ENCODE measurements at regions of chr2 and their contacts with region 1.

Region 1: DNA sequence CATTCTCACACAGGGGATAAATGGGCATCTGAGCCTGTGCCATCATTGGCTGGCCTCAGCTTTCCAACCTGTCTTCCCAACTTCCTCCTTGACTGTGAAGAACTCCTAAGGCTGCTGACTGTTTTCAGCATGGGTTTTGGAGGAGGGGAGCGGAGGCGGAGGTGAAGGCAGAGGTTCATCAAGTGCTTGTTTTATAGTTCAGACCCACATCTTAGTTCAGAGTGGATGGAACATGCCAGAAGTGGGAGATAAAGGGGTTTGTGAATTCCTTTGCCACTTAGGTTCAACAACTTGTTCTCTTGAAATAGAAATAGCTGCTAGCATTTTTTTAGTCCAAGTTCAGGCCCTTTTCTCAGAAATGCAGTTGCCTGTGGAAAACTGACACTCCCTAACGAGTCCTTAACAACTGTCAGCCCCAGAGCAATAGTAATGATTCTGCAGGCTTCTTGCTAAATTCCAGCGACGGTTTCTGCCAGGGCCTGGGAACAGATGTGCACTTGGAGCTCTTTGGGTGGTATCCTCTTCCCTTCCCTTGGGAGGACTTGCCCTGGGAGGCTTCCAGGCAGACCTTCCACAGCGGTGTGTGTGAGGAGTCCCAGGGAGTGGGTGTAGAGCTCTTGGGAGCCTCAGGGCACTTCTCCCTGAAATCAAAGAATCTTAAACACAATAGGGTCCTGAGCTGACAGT is 30.1 kb upstream of the ITGA6 start:
- DNase-seq: peak in 1 of 5 donors; percentile 34
- ATAC-seq: peak; percentile 28 to 60 (median 38)
- H3K4me3 ChIP-seq: no peak overlapping the region
- H3K27ac ChIP-seq: peak overlapping the region in 9 of 12 donors; percentile 15 to 53 (median 45)
- H3K4me1 ChIP-seq: peaks cover 6 to 63% (median 31%) of the 10 kb centered on the region in 12 donors
- H3K27me3 ChIP-seq: no peaks in the 10 kb centered on the region
- CTCF ChIP-seq: no peak
- POLR2A ChIP-seq: no peak

Region 2: GRCh38 chr2:172200495-172201085 is 196.7 kb before region 1 on chr2:
- intact Hi-C with region 1: loop called in 1 of 10 experiments (anchors 10 kb)
- DNase-seq: no peak
- ATAC-seq: no peak
- H3K4me3 ChIP-seq: no peak overlapping the region
- H3K27ac ChIP-seq: no peak overlapping the region
- H3K4me1 ChIP-seq: peaks cover 0 to 11% (median 0%) of the 10 kb centered on the region in 12 donors
- H3K27me3 ChIP-seq: no peaks in the 10 kb centered on the region
- CTCF ChIP-seq: peak in 10 of 12 donors; percentile 25 to 54 (median 36)
- POLR2A ChIP-seq: no peak

Region 3: GRCh38 chr2:172307800-172308199 is 89.5 kb before region 1 on chr2:
- intact Hi-C with region 1: loop called in 1 of 10 experiments (anchors 5 kb)
- DNase-seq: peak in 4 of 5 donors; percentile 33 to 63 (median 57)
- ATAC-seq: peak; percentile 14 to 55 (median 42)
- H3K4me3 ChIP-seq: no peak overlapping the region
- H3K27ac ChIP-seq: peak overlapping the region in 9 of 12 donors; percentile 18 to 67 (median 56)
- H3K4me1 ChIP-seq: peaks cover 0 to 39% (median 12%) of the 10 kb centered on the region in 12 donors
- H3K27me3 ChIP-seq: no peaks in the 10 kb centered on the region
- CTCF ChIP-seq: no peak
- POLR2A ChIP-seq: no peak

Region 4: DNA sequence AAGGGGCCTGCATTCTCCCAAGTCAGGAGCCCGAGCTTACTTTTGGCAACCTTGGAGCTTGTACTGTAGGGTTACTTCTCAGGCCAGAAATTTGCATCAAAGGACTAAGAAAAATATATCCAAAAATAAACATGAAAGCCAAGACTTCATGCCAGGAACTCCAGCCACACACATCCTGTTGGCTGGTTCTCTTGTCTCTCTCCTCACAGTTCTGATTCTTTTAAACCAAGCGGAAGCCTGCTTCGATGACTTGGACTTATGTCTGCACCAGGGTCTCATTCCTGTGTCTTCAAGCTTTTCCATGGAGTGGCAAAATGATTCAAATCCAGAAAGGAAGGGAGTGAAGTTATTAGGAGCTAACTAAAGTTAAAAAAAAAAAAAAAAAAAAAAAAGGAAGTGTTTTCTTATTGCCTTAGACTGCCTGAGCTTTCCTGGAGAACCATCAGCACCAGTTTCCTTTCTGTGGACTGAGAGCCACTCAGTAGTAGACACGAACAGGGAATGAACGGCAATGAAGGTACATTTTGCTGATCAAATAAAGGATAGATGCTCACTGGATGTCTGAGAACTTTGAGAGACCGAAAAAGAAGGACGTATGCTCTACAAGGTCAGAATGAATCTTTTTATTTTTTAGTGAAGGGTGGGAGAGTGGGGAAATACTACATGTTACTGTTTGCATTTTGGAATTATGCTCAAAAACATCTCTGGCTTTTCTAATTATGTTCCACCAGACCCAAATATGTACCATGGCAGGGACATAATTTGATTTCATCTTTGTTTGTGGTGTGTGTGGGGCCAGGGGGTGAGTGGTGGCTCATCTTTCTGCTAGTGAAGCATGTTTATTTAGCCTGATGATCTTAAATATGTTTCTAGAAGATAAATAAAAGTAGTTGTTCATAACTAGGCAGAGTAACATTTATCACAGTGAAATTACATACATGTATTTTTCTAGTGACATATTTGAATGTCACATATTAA is 424.4 kb after region 1 on chr2:
- intact Hi-C with region 1: no loop called
- DNase-seq: peak in 1 of 5 donors; percentile 33
- ATAC-seq: peak in 3 of 4 donors; percentile 45 to 82 (median 59)
- H3K4me3 ChIP-seq: peak overlapping the region; percentile 9 to 55 (median 42)
- H3K27ac ChIP-seq: peak overlapping the region in 11 of 12 donors; percentile 40 to 77 (median 68)
- H3K4me1 ChIP-seq: peaks cover 0 to 17% (median 0%) of the 10 kb centered on the region in 12 donors
- H3K27me3 ChIP-seq: no peaks in the 10 kb centered on the region
- CTCF ChIP-seq: no peak
- POLR2A ChIP-seq: no peak

Measured in heart left ventricle (tissue), 16 donors.